ENCODE measurements at regions of chr1 and their contacts with region 1.

Region 1: GRCh38 chr1:7069931-7070330 is 284.7 kb downstream of the CAMTA1 start:
- DNase-seq: no peak
- H3K4me3 ChIP-seq: peak overlapping the region; percentile 13 to 26
- H3K27ac ChIP-seq: no peak overlapping the region
- H3K4me1 ChIP-seq: no peaks in the 10 kb centered on the region
- H3K27me3 ChIP-seq: no peaks in the 10 kb centered on the region
- CTCF ChIP-seq: no peak
- POLR2A ChIP-seq: no peak

Region 2: GRCh38 chr1:6730473-6730872 is 339.5 kb before region 1 on chr1:
- intact Hi-C with region 1: loop called (anchors 10 kb)
- DNase-seq: no peak
- H3K4me3 ChIP-seq: no peak overlapping the region
- H3K27ac ChIP-seq: no peak overlapping the region
- H3K4me1 ChIP-seq: no peaks in the 10 kb centered on the region
- H3K27me3 ChIP-seq: no peaks in the 10 kb centered on the region
- CTCF ChIP-seq: no peak
- POLR2A ChIP-seq: no peak

Region 3: DNA sequence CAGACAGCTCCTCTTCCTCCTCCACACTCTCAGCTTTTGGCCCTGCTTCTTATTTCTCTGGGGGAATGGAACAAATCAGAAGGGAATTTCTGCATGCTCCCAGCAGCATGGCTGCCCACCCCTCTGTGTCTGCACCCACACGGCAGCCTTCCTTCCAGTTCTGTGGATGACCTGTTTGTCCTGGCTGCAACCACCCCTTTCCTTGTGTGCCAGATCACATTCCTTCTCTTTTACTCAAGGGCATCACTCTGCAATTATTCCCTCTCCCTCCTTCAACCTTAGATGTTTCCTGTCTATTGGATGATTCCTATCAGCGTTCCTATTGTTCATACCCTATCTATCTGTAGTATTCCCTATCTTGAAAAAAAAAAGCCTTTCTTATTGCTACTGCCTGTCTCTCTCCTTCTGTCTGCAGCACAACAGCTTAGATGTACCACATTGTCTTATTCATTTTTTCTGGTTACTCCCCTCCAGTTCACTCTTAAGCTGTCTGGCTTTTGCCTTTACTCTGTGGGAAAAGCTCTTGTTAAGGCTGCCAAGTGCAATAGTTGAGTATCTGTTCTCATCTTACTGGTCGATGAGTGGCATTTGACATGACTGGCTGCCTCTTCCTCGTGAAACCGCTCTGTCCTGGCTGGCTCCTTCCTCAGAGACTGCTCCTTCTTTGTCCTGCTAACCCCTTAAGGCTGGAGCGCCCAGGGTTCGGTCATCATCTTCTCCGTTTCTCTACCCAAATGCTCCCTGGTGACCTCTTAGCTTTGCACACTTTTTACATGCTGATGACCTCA is 66.4 kb after region 1 on chr1:
- intact Hi-C with region 1: no loop called
- DNase-seq: no peak
- H3K4me3 ChIP-seq: no peak overlapping the region
- H3K27ac ChIP-seq: no peak overlapping the region
- H3K4me1 ChIP-seq: no peaks in the 10 kb centered on the region
- H3K27me3 ChIP-seq: no peaks in the 10 kb centered on the region
- CTCF ChIP-seq: no peak
- POLR2A ChIP-seq: no peak